CD8-positive, alpha-beta T cell (primary cell): ENCODE measurements at regions of chr7 and their contacts with region 1.

Region 1: GRCh38 chr7:53387515-53387914 is 352.1 kb downstream of the POM121L12 start:
- DNase-seq: no peak
- ATAC-seq: no peak
- H3K4me3 ChIP-seq: no peak overlapping the region
- H3K4me3 Mint-ChIP-seq: no peak overlapping the region
- H3K27ac ChIP-seq: no peak overlapping the region
- H3K27ac Mint-ChIP-seq: no peak overlapping the region
- H3K4me1 ChIP-seq: no peaks in the 10 kb centered on the region
- H3K4me1 Mint-ChIP-seq: no peaks in the 10 kb centered on the region
- H3K27me3 ChIP-seq: no peaks in the 10 kb centered on the region
- H3K27me3 Mint-ChIP-seq: no peaks in the 10 kb centered on the region
- CTCF ChIP-seq: no peak

Region 2: GRCh38 chr7:53350241-53350640 is 37.3 kb before region 1 on chr7:
- CTCF ChIA-PET with region 1: no interaction called
- POLR2A ChIA-PET with region 1: no interaction called
- intact Hi-C with region 1: loop called in 1 of 2 experiments (anchors 5 kb)
- DNase-seq: no peak
- ATAC-seq: no peak
- H3K4me3 ChIP-seq: no peak overlapping the region
- H3K4me3 Mint-ChIP-seq: no peak overlapping the region
- H3K27ac ChIP-seq: no peak overlapping the region
- H3K27ac Mint-ChIP-seq: no peak overlapping the region
- H3K4me1 ChIP-seq: no peaks in the 10 kb centered on the region
- H3K4me1 Mint-ChIP-seq: no peaks in the 10 kb centered on the region
- H3K27me3 ChIP-seq: no peaks in the 10 kb centered on the region
- H3K27me3 Mint-ChIP-seq: no peaks in the 10 kb centered on the region
- CTCF ChIP-seq: no peak